ENCODE measurements at regions of chr11 and their contacts with region 1.

Region 1: DNA sequence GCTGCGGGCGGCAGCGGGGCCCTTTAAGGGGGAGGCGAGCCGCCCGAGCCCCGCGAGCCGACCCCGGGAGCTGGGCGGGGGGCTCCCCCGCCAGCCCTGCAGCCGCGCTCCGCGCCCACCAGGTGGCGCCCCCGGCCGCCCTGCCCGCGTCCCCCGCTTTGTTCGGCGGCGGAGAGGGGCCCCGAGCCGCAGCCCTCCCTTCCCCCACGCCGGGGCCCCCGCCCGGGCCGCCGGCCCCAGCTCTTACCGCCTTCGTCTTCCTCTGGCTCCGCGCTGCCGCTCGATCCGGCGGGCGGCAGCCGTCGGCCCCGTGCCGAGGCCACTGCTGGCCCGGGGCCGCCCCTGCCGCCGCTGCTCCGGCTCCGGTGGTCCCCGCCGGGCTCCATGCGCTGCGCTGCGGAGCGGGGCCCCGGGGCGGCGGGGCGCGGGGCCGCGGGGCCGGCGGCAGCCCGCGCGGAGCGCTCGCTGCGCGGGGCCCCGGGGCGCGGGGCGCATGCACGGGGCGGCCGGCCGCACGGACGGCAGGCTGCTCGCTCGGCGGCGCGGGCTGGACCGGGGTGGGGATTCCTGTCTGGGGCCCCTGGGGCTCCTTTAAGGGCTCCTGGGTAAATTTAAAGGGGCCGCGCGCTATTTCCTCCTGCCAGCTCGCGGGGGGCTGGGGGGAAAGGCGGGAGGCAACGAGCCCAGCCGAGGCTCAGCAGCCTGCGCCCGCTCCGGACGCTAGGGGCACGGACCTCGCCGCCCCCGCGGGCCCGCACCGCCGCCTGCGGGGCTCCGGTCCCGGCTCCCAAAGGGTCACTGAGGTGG is at the start of gene ZFTA:
- DNase-seq: peak; percentile 70 to 72
- H3K4me3 ChIP-seq: peak within 1 kb of the TSS; percentile 53 to 87 (median 81)
- H3K27ac ChIP-seq: peak within 1 kb of the TSS; percentile 82 to 92 (median 83)
- H3K4me1 ChIP-seq: peaks cover 23 to 40% of the 10 kb centered on the region in 2 donors
- H3K27me3 ChIP-seq: no peaks in the 10 kb centered on the region
- CTCF ChIP-seq: peak in 4 of 6 experiments; percentile 45 to 99 (median 88)
- POLR2A ChIP-seq: no peak
- total RNA-seq, gene ZFTA: 14.7 to 29.7 (median 18.6) TPM

Region 2: GRCh38 chr11:63813035-63813562 is 44.7 kb after region 1 on chr11 and contains the start of gene SPINDOC:
- intact Hi-C with region 1: loop called (anchors 10 kb)
- DNase-seq: peak; percentile 79
- H3K4me3 ChIP-seq: peak within 1 kb of the TSS; percentile 78 to 92 (median 88)
- H3K27ac ChIP-seq: peak within 1 kb of the TSS in 2 of 3 donors; percentile 52 to 61
- H3K4me1 ChIP-seq: peaks cover 10 to 13% of the 10 kb centered on the region in 2 donors
- H3K27me3 ChIP-seq: no peaks in the 10 kb centered on the region
- CTCF ChIP-seq: no peak
- POLR2A ChIP-seq: peak in 1 of 2 donors; percentile 72
- total RNA-seq, gene SPINDOC: 7.4 to 12.6 (median 10.3) TPM

Measured in thyroid gland (tissue), 4 donors.